ENCODE measurements at regions of chr2 and their contacts with region 1.

Region 1: GRCh38 chr2:120694034-120694433 is 41.6 kb upstream of the GLI2 start:
- DNase-seq: no peak

Region 2: GRCh38 chr2:120625865-120626560 is 68.0 kb before region 1 on chr2:
- intact Hi-C with region 1: no loop called
- DNase-seq: peak in 2 of 42 donors; percentile 8 to 20

Region 3: GRCh38 chr2:121075006-121075551 is 381.0 kb after region 1 on chr2:
- intact Hi-C with region 1: loop called (anchors 2 kb)
- DNase-seq: peak in 8 of 42 donors; percentile 20 to 62 (median 42)

Region 4: DNA sequence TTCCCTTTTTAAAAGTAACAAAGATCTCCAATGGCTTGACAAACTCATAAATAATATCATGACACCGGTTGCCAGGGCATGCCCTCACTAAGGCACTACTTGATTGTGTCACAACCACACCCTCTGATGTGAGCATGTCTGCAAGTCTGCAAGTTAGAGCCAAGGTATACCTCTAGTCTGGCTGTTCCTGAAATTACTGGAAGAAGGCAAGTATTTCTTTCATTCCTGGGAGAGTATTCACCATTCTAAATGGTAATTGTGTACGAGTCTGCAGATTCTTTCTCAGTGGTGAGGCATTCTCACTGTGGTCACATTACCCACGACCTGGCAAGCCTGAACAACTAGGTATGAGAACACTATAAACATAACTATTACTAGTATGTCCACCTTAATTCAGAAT is 811.0 kb after region 1 on chr2:
- intact Hi-C with region 1: no loop called
- DNase-seq: no peak